Head of caudate nucleus (tissue), 42 donors: ENCODE measurements at regions of chr17 and their contacts with region 1.

Region 1: DNA sequence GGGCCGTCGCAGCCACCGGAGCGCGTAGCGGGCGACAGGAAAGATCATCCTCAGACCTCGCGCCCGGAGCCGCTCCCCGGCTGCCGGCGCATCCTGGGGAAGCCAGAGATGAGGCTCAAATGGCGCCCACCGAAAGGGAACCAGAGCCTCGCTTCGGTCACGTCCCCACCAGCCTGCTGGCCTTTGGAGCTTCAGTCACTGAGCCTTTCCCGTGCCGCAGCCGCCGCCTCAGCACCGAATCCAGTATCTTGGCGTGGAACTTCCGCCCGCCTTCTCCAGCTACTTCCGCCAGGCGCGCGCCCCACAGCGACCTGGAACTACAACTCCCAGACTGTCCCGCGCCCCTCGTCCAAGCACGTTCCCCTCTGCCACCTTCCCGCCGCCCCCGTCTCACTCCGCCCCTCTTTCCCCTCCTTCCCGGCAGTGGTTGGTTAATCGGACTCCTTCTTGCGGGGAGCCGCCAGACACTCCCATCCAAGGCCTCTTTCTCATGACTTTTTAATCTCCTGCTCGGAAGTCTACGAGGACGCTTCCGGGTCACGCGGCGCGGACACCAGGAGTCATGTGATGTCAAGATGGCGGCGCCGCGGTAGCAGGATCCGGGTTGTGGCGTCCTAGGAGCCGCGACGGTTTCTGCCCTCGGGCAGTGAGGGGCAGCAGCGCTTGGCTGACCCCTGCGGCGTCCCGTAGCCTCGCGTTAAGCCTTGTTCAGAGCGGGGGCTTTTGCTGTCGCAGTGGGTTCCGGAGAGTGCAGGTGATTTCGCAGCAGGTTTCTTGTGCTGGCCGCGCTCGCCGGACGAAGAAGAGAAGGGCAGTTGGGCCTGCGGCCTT is at the starts of genes SMCR8 and TOP3A:
- DNase-seq: peak; percentile 95 to 99 (median 98)

Region 2: GRCh38 chr17:18087610-18088491 is 227.1 kb before region 1 on chr17 and contains the start of gene DRG2:
- intact Hi-C with region 1: loop called (anchors 5 kb)
- DNase-seq: peak; percentile 81 to 96 (median 90)

Region 3: DNA sequence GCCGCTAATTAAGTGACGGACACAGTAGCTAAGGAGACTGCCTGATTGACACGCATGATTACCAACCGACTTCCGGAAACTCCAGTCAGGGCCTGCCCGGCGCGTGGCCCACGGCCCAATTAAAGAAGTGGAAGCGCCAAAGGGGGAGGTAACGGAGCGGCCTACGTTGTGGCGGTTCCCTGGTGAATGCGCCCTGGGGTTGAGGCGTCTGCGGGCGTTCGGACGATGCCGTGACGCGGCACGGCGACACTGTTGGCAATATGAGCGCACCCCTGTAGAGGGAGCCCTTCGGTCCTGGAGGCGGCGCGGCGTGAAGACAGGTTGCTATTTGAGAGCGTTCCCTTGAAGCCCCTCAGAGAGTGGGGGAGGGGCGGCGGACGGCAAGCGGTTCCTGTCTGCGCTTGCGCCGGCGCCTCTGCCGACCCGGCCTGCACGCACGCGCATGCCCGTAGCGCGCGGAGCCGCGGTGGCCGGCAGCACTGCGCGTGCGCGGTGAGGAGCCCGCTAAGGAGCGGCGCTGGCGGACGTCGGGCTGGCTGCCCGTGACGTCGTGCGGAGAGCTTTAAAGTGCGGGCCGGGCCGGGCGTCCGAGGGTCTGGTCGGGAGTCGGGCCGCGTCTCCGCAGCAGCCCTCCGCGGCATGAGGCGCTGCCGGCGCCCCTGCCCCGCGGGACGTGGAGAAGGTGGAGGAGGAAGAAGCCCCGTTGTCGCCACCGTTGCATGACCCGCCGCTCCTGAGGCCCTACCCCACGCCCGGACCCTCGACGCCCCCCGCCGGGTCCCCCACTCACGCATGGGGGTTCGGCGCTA is 131.4 kb before region 1 on chr17 and contains the start of gene ALKBH5:
- intact Hi-C with region 1: loop called (anchors 10 kb)
- DNase-seq: peak; percentile 94 to 99 (median 98)

Region 4: DNA sequence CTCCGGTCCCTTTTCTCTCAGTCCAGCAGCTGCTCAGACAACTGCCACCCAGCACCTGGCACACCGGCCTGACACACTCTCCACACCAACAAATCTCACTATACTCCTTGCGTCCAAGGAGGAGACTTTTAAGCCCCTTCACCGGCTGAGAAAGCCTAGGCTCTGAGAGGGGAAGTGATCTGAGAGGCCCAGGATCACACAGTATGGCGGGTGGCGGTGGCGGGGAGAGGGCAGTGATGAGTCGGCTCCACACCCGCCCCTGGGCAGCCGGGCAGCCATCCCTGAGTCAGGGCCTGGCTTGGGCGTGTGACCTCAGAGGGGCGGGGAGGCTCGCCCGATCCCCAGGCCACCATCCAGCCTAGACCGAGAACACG is 57.0 kb before region 1 on chr17:
- intact Hi-C with region 1: loop called (anchors 10 kb)
- DNase-seq: peak in 41 of 42 donors; percentile 48 to 91 (median 73)

Region 5: DNA sequence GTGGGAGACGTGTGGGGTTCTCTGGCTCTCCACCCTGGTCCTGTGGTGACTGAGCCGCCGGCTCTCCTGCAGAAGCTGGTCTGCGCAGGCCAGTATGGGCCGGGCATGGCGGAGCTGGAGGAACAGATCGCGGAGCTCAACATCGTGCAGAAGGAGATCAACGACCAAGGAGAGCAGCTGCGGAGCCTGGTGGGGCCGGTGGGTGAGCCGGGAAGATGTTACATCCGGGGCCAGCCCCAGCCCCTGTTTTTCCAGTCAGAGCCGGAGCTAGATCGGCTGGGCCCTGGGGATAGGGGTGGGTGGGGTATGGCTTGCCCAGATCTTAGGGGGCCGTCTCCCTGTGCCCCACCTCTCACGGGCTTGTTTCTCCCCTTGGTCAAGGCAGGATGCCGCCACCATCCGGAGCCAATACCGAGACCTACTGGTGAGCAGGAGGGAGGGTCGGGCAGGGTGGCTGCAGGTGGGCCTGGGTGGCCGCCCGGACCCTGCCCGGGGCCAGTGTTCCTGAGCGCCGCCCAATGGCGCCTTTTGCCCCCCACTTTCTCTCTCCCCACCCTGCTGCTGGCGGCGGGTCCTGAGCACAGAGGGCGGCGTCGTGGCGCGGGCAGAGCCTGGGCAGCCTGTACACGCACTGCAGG is 67.6 kb after region 1 on chr17:
- intact Hi-C with region 1: no loop called
- DNase-seq: peak in 1 of 42 donors; percentile 22